ENCODE measurements at regions of chr7 and their contacts with region 1.

Region 1: GRCh38 chr7:41624816-41625215 is 78.1 kb downstream of the INHBA start:
- DNase-seq: no peak
- ATAC-seq: no peak
- H3K4me3 ChIP-seq: no peak overlapping the region
- H3K27ac ChIP-seq: no peak overlapping the region
- H3K4me1 ChIP-seq: no peaks in the 10 kb centered on the region
- H3K27me3 ChIP-seq: no peaks in the 10 kb centered on the region
- CTCF ChIP-seq: no peak

Region 2: GRCh38 chr7:41297166-41297565 is 327.6 kb before region 1 on chr7:
- CTCF ChIA-PET with region 1: interaction called, 14 read pairs
- POLR2A ChIA-PET with region 1: no interaction called
- in situ Hi-C with region 1: no loop called
- intact Hi-C with region 1: no loop called
- DNase-seq: no peak
- ATAC-seq: no peak
- H3K4me3 ChIP-seq: no peak overlapping the region
- H3K27ac ChIP-seq: no peak overlapping the region
- H3K4me1 ChIP-seq: no peaks in the 10 kb centered on the region; the same call in 1 of the 2 replicates
- H3K27me3 ChIP-seq: no peaks in the 10 kb centered on the region
- CTCF ChIP-seq: no peak

Measured in Panc1 (cell line).